ENCODE measurements at regions of chr17 and their contacts with region 1.

Region 1: GRCh38 chr17:64129764-64130558 is at the start of gene ERN1:
- DNase-seq: peak; percentile 86 to 94 (median 93)
- H3K4me3 ChIP-seq: peak within 1 kb of the TSS; percentile 65 to 89 (median 85)
- H3K27ac ChIP-seq: peak within 1 kb of the TSS; percentile 33 to 75
- H3K4me1 ChIP-seq: peaks cover 0 to 22% (median 18%) of the 10 kb centered on the region in 4 experiments
- H3K27me3 ChIP-seq: no peaks in the 10 kb centered on the region

Region 2: DNA sequence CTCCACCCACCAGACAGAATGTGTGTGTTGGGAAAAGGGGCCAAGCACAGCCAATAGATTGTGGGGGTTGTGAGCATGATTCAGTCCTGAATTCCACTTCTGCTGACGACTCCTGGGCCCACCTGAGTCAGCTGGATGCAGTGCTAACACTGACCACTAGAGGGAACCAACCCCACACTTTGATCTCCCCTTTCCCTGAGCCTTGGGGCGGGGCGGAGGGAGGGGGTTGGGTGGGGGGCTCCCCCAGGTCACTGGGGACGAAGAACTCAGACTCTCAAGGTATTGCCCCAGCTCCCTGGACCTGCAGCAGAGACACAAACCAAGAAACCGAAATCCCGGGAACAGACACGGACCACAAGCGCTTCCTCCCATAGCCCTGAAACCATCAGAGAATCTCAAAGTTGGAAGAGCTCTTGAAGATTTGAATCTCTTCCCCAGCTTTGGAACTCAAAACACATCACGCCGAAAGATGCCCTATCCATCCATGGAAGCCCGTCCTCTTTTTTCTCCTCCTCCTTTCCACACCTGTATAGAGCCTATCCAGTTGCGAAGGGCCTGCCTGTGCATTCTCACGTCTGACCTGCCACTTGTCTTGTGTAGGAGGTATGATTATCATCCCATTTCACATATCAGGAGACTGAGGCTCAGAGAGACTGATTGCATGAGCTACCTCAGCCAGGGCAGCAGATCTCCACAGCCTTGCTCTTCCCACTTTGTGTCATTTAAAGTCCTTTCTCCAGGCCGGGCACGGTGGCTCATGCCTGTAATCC is 218.1 kb before region 1 on chr17:
- CTCF ChIA-PET with region 1: interaction called, 12 read pairs
- POLR2A ChIA-PET with region 1: no interaction called
- DNase-seq: peak in 2 of 3 donors; percentile 48 to 61
- H3K4me3 ChIP-seq: no peak overlapping the region
- H3K27ac ChIP-seq: no peak overlapping the region
- H3K4me1 ChIP-seq: no peaks in the 10 kb centered on the region
- H3K27me3 ChIP-seq: no peaks in the 10 kb centered on the region

Region 3: DNA sequence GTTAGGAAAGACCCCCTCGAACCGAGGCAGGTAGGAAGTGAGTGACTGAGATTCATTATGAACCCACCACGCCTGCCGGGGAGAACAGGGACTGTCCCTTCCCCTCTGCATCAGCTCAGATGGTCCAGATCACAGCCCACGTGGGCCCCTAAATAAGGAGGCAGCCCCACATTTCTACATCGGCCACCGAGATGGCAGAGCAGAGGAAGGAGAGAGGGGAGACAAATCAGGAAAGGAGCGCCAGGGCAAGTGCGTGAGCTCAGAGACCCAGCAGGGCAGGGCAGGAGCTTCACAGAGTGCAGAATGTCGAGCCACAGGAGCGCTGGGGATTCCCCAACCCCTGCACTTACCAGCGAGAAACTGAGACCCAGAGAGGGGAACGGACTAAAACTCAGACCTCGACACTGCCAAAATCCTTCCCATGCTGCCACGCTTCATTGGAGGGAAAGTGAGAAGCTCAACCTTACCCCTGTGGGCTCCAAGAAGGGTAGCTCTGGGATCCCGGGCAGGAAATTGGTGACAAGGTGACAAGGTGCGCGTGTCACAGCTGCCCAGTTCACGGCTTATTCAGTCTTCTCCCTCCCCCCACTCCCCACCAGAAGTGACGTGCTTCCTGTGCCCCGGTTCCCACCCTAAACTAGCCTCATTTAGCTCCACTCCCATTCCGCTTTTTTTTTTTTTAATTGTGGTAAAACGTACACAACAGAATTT is 109.8 kb before region 1 on chr17 and contains the start of gene ICAM2:
- CTCF ChIA-PET with region 1: interaction called, 184 read pairs
- POLR2A ChIA-PET with region 1: interaction called, 5 read pairs
- DNase-seq: peak; percentile 98 to 99 (median 99)
- H3K4me3 ChIP-seq: peak within 1 kb of the TSS; percentile 3 to 76 (median 72)
- H3K27ac ChIP-seq: peak within 1 kb of the TSS; percentile 96 to 99
- H3K4me1 ChIP-seq: peaks cover 32 to 95% (median 80%) of the 10 kb centered on the region in 4 experiments
- H3K27me3 ChIP-seq: no peaks in the 10 kb centered on the region

Region 4: GRCh38 chr17:64063766-64064224 is 66.2 kb before region 1 on chr17:
- CTCF ChIA-PET with region 1: interaction called, 212 read pairs
- POLR2A ChIA-PET with region 1: interaction called, 11 read pairs
- DNase-seq: peak; percentile 70 to 84 (median 82)
- H3K4me3 ChIP-seq: peak overlapping the region in 2 of 7 experiments; percentile 15 to 43
- H3K27ac ChIP-seq: no peak overlapping the region
- H3K4me1 ChIP-seq: peaks cover 0 to 24% (median 12%) of the 10 kb centered on the region in 4 experiments
- H3K27me3 ChIP-seq: no peaks in the 10 kb centered on the region

Region 5: GRCh38 chr17:64117981-64118979 is 11.7 kb before region 1 on chr17:
- CTCF ChIA-PET with region 1: interaction called, 25 read pairs
- POLR2A ChIA-PET with region 1: interaction called, 15 read pairs
- DNase-seq: peak; percentile 44 to 89 (median 83)
- H3K4me3 ChIP-seq: no peak overlapping the region
- H3K27ac ChIP-seq: no peak overlapping the region
- H3K4me1 ChIP-seq: peaks cover 6 to 23% (median 16%) of the 10 kb centered on the region in 4 experiments
- H3K27me3 ChIP-seq: no peaks in the 10 kb centered on the region

Measured in common myeloid progenitor, CD34-positive (primary cell).